ENCODE measurements at regions of chr9 and their contacts with region 1.

Region 1: GRCh38 chr9:31119882-31120454 is 1264.5 kb upstream of the ACO1 start:
- DNase-seq: no peak
- H3K4me3 Mint-ChIP-seq: no peak overlapping the region
- H3K27ac Mint-ChIP-seq: no peak overlapping the region
- H3K4me1 Mint-ChIP-seq: no peaks in the 10 kb centered on the region
- H3K27me3 Mint-ChIP-seq: no peaks in the 10 kb centered on the region

Region 2: DNA sequence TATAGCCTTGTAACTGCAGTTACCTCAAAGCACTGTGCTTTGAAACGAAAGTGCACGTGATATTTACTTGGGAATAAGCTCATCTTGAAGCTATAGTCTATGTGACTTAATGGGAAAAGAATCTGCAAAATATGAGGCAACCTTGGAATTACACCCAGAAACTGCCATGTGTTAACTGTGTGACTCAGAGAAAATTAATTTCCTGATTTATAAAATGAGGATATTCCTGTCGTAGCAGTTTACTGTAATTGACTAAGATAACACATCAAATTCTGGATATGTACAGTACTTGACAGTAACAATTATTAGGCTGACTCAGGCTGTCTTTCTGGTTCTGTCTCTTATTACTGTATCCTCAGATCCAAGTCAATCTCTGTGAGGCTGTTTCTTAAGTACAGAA is 184.6 kb after region 1 on chr9:
- intact Hi-C with region 1: loop called (anchors 5 kb)
- DNase-seq: no peak
- H3K4me3 Mint-ChIP-seq: no peak overlapping the region
- H3K27ac Mint-ChIP-seq: no peak overlapping the region
- H3K4me1 Mint-ChIP-seq: peaks cover 11% of the 10 kb centered on the region
- H3K27me3 Mint-ChIP-seq: no peaks in the 10 kb centered on the region